ENCODE measurements at regions of chr1 and their contacts with region 1.

Region 1: DNA sequence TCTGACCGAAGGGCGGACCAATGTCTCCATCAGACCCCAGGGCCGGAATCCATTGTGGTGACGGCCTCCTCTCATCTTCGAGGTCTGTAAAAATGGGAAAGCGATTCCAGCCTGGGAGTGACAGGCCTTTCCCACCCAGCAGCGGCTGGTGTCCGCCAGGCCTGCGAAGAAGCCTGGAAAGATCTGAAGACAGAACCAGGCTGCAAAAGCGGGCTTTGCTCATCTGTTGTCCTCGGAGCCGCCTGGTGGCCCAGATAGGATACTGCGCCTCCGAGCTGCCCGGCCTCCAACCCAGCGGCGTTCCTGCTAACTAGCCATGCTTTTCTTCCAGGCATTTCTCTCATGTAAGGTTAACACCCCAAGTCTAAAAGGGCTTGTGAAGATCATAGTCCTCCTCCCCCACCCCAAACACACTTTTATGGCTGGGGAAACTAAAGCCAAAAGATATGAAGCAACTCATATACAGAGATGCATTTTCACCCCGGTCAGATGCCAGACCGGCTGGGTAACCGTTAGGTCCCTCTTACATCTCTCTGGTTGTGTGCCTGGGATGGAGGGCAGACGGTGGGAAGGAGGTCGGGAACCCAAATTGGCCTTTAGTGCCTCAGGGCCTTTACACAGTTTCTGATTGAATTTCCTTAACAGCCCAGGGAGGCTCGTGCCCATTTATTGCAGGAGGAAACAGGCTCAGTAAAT is 1.9 kb upstream of the DHRS3 start:
- DNase-seq: peak; percentile 84 to 91 (median 90)
- H3K4me3 ChIP-seq: no peak overlapping the region
- H3K27ac ChIP-seq: peak overlapping the region; percentile 60 to 88
- H3K4me1 ChIP-seq: peaks cover 11% of the 10 kb centered on the region
- H3K27me3 ChIP-seq: no peaks in the 10 kb centered on the region
- CTCF ChIP-seq: peak; percentile 87 to 96 (median 91)
- EP300 ChIP-seq: no peak
- POLR2A ChIP-seq: no peak

Region 2: DNA sequence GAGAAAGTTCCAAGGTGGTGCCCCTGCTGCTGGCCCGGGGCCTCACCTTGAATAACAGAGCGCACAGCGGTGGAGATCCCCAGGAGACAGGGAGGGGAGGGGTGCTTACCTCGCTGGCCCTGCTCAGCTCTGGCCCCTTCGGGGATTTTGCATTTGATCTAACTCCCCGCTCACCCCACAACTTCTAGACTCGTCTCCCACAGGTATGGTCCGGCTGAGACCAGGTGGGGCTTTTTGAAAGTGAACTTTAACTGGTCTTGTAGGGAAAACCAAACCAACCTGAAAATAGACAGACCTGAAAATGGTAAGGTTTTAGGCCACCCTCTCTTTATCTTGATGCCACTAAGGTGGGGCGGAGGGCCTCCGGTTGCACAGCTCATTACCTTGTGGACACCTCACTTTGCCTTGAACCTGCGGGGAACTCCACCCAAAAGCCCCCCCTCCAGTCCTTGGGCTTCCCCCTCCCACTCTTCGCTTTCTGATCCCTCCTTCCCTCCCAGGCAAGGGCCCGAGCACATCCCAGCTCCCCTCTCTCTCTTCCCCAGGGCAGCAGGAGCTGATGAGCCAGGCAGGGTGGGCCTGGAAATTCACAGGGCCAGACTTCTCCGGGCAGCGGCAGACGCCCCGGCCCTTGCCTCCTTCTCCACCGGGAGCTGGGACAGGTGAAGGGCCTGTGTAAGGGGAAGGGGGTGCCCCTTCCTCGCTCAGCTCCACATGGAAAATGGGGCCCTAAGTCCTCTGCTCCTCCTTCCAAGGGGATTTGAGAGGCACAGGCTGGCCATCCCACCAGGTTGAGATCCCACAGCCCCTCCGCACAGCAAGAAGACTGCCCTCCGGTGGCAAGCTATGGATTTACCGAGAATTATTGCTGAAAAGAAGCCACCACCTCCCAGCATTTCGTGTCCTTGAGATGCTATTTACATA is 540.7 kb before region 1 on chr1:
- intact Hi-C with region 1: no loop called
- DNase-seq: peak; percentile 59 to 66 (median 62)
- H3K4me3 ChIP-seq: no peak overlapping the region
- H3K27ac ChIP-seq: no peak overlapping the region
- H3K4me1 ChIP-seq: peaks cover 2% of the 10 kb centered on the region
- H3K27me3 ChIP-seq: no peaks in the 10 kb centered on the region
- CTCF ChIP-seq: peak; percentile 23 to 52 (median 28)
- EP300 ChIP-seq: no peak
- POLR2A ChIP-seq: no peak

Region 3: DNA sequence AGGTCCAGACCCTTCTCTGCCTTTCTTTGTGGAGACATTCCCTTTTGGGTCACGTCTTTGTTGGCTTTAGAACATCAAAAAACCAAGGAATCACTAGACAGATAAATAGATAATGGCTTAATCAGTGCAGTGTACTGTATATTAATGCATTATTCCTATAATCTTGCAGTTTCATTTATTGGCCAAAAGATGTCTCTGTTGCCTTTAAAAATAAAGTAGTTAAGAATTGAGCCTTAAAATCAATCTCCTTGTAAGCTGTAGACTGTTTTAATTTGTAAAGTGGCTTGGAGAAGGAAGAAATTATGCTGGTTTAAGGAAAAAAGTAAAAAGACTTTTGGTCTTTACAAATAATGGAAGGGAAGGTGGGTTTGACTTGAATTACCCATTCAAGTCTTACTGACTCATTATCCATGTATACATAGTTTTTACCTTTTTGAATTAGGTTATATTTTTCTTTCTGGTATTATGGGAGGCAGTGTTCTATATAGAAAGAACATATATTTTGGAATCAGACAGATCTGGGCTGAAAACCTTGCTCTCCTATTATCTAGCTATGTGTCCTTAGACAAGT is 305.5 kb before region 1 on chr1:
- intact Hi-C with region 1: loop called (anchors 5 to 10 kb)
- DNase-seq: no peak
- H3K4me3 ChIP-seq: no peak overlapping the region
- H3K27ac ChIP-seq: no peak overlapping the region
- H3K4me1 ChIP-seq: peaks cover 1% of the 10 kb centered on the region
- H3K27me3 ChIP-seq: no peaks in the 10 kb centered on the region
- CTCF ChIP-seq: no peak
- EP300 ChIP-seq: no peak
- POLR2A ChIP-seq: no peak

Region 4: DNA sequence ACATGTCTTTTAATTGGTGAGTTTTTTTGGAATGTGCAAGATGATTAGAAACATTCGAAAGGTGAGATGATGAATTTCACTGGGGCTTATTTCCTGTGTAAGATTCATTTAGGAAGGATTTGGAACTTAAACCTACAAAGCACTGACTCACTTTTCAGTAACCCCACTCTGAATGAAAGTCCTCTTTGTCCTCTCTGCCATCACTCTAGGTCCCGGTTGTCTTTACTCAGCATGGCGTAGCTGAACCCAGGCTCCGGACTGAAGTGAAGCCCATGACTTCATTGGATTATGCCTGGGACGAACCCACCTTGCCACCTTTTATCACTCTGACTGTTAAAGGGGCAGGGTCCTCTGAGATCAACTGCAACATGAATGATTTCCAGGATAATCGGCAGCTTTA is 250.7 kb before region 1 on chr1:
- intact Hi-C with region 1: no loop called
- DNase-seq: no peak
- H3K4me3 ChIP-seq: no peak overlapping the region
- H3K27ac ChIP-seq: no peak overlapping the region
- H3K4me1 ChIP-seq: no peaks in the 10 kb centered on the region
- H3K27me3 ChIP-seq: no peaks in the 10 kb centered on the region
- CTCF ChIP-seq: no peak
- EP300 ChIP-seq: no peak
- POLR2A ChIP-seq: no peak

Region 5: DNA sequence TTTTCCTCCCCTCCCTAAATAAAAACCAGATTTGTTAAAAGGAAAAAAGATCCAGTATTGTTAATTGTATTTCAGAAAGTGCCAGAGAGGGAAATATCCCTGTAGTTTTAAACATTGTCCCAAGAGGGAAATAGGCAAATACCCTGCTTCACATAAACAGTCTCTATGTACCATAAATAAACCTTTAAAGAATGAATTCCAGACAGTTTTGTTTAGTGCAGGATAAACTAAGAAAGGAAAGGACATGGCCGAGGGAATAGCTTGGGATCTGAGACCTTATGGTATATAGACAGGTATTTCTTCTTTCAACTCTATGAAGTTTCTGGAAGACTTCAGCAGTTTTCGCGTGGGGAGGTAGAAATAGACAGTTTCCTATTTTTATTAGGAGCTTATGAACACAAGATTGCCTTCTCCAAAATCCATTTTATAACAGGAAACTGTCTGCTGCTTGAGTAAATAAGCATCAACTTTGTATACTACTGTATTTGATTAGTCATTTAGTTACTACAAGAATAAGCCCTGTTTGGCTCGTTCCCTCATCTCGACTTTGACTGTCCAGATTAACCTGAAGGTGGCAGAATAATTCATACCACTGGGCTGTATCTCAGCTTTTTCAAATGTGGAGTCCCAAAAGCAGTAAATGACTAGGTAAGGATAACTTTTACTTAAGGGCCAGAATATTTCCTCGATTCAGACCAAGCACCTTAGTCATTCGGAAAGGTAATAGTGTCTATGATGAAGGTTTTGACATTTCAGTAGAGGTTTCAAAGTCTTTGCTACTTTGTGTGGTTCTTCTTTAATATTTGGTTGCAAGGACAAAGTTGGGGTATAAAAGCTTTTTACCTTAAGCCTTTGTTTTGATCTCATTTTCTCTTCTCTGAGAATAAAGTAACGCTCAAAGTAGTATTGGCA is 212.6 kb before region 1 on chr1:
- intact Hi-C with region 1: loop called in 3 of 4 experiments (anchors 5 kb)
- DNase-seq: peak in 1 of 5 donors; percentile 31
- H3K4me3 ChIP-seq: no peak overlapping the region
- H3K27ac ChIP-seq: no peak overlapping the region
- H3K4me1 ChIP-seq: peaks cover 5% of the 10 kb centered on the region
- H3K27me3 ChIP-seq: no peaks in the 10 kb centered on the region
- CTCF ChIP-seq: peak in 2 of 3 donors; percentile 9 to 47
- EP300 ChIP-seq: no peak
- POLR2A ChIP-seq: no peak

Region 6: GRCh38 chr1:12477936-12478611 is 141.9 kb before region 1 on chr1:
- intact Hi-C with region 1: loop called in 2 of 4 experiments (anchors 5 to 10 kb)
- DNase-seq: peak; percentile 80 to 95 (median 93)
- H3K4me3 ChIP-seq: no peak overlapping the region
- H3K27ac ChIP-seq: peak overlapping the region in 1 of 2 donors; percentile 83
- H3K4me1 ChIP-seq: peaks cover 21% of the 10 kb centered on the region
- H3K27me3 ChIP-seq: no peaks in the 10 kb centered on the region
- CTCF ChIP-seq: no peak
- EP300 ChIP-seq: no peak
- POLR2A ChIP-seq: no peak

Region 7: DNA sequence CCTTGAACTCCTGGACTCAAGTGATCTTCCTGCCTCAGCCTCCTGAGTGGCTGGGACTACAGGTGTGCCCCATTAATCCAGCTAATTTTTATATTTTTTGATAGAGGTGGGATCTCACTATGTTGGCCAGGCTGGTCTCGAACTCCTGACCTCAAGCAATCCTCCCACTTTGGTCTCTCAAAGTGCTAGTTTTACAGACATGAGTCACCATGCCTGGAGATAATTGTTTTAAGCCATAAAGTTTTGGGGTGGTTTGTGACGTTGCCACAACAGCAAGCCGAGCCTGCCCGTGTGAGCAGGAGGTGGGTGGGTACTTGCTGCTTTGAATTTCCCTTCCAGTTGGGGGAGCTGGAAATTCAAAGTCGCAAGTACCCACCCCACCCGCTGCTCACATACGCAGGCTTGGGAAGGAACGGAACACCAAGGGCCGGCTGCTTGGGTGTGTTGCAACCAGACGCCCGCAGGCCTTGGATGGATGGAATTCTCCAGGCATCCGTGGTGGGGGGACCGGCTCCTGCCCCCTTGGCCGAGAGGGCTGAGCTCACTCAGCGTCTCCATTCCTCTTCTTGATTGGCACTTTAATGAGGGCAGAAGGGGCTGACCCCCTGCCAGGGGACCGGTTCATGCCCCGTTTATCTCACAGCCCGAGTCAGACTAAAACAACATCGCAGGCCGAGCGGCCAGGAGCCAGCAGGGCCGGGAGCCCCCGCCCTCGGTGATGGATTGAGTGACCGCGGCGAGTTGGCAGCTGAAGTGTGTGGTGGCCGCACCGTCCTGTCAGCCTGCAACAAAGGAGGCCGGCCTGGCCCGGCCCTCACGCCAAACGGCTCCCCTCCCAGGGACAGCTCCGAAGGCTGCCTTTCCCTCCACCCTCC is 80.0 kb before region 1 on chr1:
- intact Hi-C with region 1: loop called in 3 of 4 experiments (anchors 2 to 10 kb)
- DNase-seq: peak; percentile 78 to 88 (median 83)
- H3K4me3 ChIP-seq: no peak overlapping the region
- H3K27ac ChIP-seq: peak overlapping the region in 1 of 2 donors; percentile 52
- H3K4me1 ChIP-seq: peaks cover 19% of the 10 kb centered on the region
- H3K27me3 ChIP-seq: no peaks in the 10 kb centered on the region
- CTCF ChIP-seq: peak in 1 of 3 donors; percentile 6
- EP300 ChIP-seq: peak; percentile 67
- POLR2A ChIP-seq: no peak

Region 8: DNA sequence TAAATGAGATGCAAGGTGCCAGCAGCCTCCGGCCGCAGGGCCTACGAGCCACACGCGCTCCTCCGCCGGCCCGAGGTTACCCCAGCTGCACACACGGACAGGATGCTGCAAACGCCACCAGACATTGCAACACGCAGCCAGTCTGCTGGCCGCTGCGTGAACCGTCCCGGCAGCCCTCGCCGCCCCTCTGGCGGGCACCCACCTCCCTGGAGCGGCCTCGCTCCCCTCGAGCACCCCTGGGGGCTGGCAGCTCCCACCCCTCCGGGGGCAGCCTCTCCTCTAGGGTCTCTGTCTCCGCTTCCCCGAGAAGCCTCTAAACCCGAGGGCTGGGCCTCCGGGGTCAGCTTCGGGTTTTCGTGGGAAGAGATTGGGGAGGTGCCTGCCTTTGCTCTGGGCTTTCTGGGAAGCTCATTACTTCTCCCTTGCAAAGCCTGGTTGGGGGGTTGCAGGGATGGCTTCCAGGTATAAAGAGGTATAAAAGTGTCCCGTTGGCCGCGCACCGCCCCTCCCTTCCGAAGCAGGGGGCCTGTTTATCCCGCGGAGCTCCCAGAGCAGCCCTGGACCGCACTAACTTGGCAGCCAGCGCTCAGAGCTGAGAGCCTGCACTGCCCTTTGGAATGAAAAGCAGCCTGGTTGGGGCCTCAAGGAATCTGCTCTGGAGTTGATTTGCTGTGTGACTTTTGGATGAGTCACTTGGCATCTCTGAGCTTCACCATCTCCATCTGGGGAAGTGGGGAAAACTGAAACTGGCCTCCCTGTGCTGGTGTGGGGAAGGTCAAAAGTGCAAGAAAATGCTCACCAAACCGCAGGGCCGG is 23.7 kb before region 1 on chr1:
- intact Hi-C with region 1: no loop called
- DNase-seq: peak; percentile 85 to 92 (median 86)
- H3K4me3 ChIP-seq: peak overlapping the region; percentile 21
- H3K27ac ChIP-seq: peak overlapping the region; percentile 15 to 93
- H3K4me1 ChIP-seq: peaks cover 38% of the 10 kb centered on the region
- H3K27me3 ChIP-seq: no peaks in the 10 kb centered on the region
- CTCF ChIP-seq: no peak
- EP300 ChIP-seq: no peak
- POLR2A ChIP-seq: no peak

Measured in ovary (tissue), 10 donors.